Activated CD4-positive, alpha-beta T cell treated with anti-CD3 and anti-CD28 coated beads for 36 hours (primary cell): ENCODE measurements at regions of chr15 and their contacts with region 1.

Region 1: DNA sequence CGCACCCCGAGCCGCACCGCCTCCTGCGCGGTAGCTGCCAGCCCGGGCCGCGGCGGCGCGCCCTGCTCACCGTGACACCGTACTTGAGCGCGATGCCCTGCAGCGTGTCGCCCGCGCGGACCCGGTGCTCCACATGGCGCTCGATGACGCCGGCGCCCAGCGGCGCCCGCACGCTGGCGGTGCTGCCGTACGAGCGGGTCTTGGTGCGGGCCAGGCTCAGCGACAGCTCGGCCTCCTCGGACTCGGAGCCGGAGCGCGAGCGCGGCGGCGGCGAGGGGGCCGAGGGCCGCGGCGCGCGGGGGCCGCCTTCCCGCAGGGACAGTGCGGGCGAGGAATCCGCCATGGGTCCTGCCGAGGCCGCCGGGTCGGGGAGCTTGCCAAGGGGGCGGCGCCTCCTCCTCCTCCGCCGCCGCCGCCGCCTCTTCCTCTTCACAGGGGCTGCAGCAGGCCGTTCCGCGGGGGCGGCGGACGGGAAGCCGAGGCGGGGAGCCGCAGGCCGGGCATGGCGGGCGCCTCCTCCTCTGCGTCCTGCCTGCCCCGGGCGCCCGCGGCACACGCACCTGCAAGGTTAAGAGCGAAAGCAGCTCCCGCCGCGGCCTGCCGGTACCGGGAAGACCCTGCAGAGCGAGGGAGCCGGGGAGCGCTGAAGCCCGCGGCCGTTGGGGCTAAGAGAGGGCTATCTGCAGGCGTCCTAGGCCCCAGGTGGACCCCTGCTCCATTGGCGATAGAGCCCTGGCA is at the start of gene LYSMD2:
- DNase-seq: peak; percentile 81
- ATAC-seq: peak; percentile 45
- H3K4me3 Mint-ChIP-seq: peak within 1 kb of the TSS; percentile 77
- H3K27ac Mint-ChIP-seq: peak within 1 kb of the TSS; percentile 88
- H3K4me1 Mint-ChIP-seq: peaks cover 55% of the 10 kb centered on the region
- H3K27me3 Mint-ChIP-seq: no peaks in the 10 kb centered on the region
- total RNA-seq, gene LYSMD2: 19.1 to 20.1 TPM

Region 2: DNA sequence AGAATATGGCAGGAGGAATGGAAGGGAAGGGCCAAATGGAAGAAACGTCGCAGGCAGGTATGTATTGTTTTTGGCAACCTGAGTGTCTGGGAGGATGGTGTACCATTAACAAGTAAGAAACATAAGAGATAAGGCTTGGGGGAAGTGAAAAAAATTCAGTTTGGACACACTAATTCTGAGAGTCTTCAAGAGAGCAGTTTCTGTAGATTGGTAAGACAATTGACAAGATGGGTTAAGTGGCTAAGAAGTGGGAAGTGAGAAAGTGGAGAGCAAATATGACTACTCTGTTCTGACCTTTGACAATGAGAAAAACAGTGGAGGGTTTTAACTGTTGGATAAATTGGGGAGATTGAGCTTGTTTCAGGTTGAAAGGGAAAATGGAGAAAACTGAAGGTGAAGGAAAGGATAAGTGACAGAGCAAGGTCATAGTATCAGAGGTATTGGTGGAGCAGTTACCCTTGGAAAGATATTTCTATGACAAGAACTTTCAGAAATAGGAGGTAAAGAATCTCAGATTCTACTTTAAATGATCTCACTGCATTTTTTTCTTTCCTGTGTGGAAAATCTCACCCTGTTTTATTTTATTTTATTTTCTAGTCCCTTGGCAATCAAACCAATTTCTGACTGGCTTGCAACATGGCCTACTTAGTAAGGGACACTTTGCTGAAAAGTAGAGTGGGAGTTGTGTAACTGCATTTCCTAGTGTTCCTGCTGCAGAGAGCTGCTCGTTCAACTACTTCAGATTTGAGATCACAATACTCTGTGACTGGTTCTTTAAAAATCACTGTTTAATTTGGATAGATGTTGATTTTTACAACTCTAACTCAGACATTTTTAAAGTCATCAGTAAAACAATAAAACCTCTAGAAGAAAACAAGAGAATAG is 1359.3 kb before region 1 on chr15:
- CTCF ChIA-PET with region 1: no interaction called
- POLR2A ChIA-PET with region 1: no interaction called
- intact Hi-C with region 1: no loop called
- DNase-seq: no peak
- ATAC-seq: peak; percentile 96
- H3K4me3 Mint-ChIP-seq: no peak overlapping the region
- H3K27ac Mint-ChIP-seq: peak overlapping the region; percentile 77
- H3K4me1 Mint-ChIP-seq: peaks cover 19% of the 10 kb centered on the region
- H3K27me3 Mint-ChIP-seq: no peaks in the 10 kb centered on the region

Region 3: GRCh38 chr15:50686468-50687301 is 1050.8 kb before region 1 on chr15 and contains the start of gene TRPM7:
- CTCF ChIA-PET with region 1: no interaction called
- POLR2A ChIA-PET with region 1: no interaction called
- intact Hi-C with region 1: loop called in 1 of 2 experiments (anchors 5 kb)
- DNase-seq: peak; percentile 95
- ATAC-seq: peak; percentile 79
- H3K4me3 Mint-ChIP-seq: peak within 1 kb of the TSS; percentile 99
- H3K27ac Mint-ChIP-seq: peak within 1 kb of the TSS; percentile 97
- H3K4me1 Mint-ChIP-seq: peaks cover 49% of the 10 kb centered on the region
- H3K27me3 Mint-ChIP-seq: no peaks in the 10 kb centered on the region
- total RNA-seq, gene TRPM7: 40.7 to 41.4 TPM

Region 4: GRCh38 chr15:51470512-51470911 is 266.9 kb before region 1 on chr15:
- CTCF ChIA-PET with region 1: no interaction called
- POLR2A ChIA-PET with region 1: no interaction called
- intact Hi-C with region 1: no loop called
- DNase-seq: no peak
- ATAC-seq: no peak
- H3K4me3 Mint-ChIP-seq: no peak overlapping the region
- H3K27ac Mint-ChIP-seq: no peak overlapping the region
- H3K4me1 Mint-ChIP-seq: no peaks in the 10 kb centered on the region
- H3K27me3 Mint-ChIP-seq: no peaks in the 10 kb centered on the region

Region 5: DNA sequence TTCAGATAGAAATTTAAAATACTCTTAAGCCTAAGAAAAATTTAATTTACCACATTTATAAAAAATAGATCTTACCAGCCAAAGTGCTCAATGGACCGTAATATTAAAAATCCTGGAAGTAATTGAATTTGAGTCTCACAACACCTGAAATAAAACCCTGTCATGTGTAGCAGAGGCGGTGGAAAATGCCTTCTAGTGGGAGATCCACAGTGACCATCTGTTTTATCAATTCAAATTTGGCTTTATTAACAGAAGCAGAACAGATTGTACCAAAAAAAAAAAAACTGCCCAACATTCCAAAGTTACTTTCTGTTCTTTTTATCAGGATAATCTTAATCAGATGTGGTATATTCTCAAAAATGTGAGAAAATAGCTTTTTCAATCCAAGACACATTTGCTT is 186.6 kb before region 1 on chr15:
- CTCF ChIA-PET with region 1: no interaction called
- POLR2A ChIA-PET with region 1: no interaction called
- intact Hi-C with region 1: no loop called
- DNase-seq: no peak
- ATAC-seq: no peak
- H3K4me3 Mint-ChIP-seq: no peak overlapping the region
- H3K27ac Mint-ChIP-seq: no peak overlapping the region
- H3K4me1 Mint-ChIP-seq: no peaks in the 10 kb centered on the region
- H3K27me3 Mint-ChIP-seq: no peaks in the 10 kb centered on the region

Region 6: DNA sequence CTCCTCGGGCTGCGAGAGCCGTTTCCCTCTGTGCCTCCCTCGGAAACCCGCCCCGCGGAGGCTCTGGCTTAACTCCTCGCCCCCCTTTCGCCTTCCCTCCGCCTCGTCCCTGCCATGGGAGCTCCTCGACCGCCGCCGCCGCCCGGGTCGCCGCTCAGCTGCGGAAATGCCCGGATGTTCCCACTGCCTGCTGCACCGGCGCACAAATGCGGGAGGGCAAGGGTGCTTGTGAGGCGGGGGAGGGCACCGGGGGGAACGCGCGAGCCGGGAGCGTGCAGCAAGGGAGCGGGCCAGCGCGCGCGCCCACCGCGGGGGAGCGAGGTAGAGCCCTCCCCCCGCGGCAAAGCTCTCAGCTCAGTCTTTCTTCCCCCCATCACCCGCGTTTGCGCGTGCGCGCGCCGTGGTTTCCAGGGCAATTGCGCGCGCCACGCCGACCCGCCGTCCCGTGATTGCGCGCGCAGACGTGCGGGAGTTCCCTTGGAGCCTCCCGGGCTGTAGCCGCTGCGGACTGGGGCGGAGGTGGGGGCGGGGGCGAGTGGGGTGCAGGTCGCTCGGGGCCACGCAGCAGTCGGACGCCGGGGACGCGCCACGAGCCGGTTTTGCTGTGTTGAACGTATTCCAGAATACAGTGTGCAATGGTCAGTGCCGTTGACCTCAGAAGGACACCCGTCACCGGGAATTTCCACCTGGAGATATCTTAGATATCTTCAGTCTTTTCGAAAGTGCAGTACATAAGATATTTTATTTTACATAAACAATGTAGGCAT is 114.7 kb before region 1 on chr15 and contains the start of gene DMXL2:
- CTCF ChIA-PET with region 1: interaction called, 3 read pairs
- POLR2A ChIA-PET with region 1: interaction called, 3 read pairs
- intact Hi-C with region 1: loop called in 1 of 2 experiments (anchors 5 kb)
- DNase-seq: peak; percentile 85
- ATAC-seq: peak; percentile 72
- H3K4me3 Mint-ChIP-seq: peak within 1 kb of the TSS; percentile 83
- H3K27ac Mint-ChIP-seq: peak within 1 kb of the TSS; percentile 58
- H3K4me1 Mint-ChIP-seq: peaks cover 21% of the 10 kb centered on the region
- H3K27me3 Mint-ChIP-seq: peaks cover 17% of the 10 kb centered on the region
- total RNA-seq, gene DMXL2: 5.9 to 7.0 TPM

Region 7: DNA sequence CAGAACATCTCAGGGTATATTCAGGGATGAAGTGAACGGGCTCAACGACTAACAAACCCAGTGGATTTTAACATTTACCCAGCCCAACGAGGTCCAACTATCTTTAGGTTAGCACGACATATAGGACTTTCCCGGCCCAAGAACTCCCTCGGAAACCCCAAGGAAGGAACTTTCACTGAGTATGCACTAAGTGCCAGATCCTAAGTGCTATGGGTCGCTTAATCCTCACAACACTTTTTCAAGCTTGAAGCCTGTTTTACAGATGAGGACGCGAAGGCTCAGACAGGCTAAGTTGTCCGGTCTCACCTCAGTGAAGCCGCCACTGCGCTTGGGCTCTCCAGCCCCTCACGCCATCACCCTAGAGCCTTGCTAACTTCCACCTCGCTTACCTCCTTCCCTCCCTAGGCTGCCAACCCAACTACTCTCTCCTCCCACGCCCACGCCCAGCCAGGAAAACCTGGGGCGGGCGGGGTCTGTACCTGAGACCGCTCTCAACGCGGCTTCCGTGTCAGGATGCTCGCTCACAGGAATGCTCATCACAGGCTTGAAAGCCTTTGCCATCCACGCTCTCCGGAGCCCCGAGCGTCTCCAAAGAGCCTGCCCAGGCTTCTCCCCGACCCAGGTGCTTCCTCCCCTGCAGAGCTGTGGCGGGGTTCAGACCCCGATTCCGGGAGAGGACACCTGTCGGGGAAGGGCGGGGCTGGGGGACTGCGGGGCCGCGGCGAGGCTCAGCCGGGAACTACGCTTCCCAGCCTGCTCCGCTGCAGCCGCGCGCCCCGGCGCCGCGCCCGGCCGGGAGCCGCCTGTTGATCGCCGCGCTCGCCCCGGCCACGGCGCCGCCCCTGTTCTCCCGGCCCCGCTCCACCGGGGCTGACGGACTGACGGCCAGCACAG is 13.6 kb after region 1 on chr15 and contains the start of gene TMOD2:
- CTCF ChIA-PET with region 1: interaction called, 7 read pairs
- POLR2A ChIA-PET with region 1: interaction called, 5 read pairs
- intact Hi-C with region 1: loop called (anchors 1 to 2 kb)
- DNase-seq: peak; percentile 72
- ATAC-seq: peak; percentile 90
- H3K4me3 Mint-ChIP-seq: peak within 1 kb of the TSS; percentile 79
- H3K27ac Mint-ChIP-seq: peak within 1 kb of the TSS; percentile 66
- H3K4me1 Mint-ChIP-seq: peaks cover 24% of the 10 kb centered on the region
- H3K27me3 Mint-ChIP-seq: peaks cover 11% of the 10 kb centered on the region
- total RNA-seq, gene TMOD2: 5.4 to 6.9 TPM

Region 8: DNA sequence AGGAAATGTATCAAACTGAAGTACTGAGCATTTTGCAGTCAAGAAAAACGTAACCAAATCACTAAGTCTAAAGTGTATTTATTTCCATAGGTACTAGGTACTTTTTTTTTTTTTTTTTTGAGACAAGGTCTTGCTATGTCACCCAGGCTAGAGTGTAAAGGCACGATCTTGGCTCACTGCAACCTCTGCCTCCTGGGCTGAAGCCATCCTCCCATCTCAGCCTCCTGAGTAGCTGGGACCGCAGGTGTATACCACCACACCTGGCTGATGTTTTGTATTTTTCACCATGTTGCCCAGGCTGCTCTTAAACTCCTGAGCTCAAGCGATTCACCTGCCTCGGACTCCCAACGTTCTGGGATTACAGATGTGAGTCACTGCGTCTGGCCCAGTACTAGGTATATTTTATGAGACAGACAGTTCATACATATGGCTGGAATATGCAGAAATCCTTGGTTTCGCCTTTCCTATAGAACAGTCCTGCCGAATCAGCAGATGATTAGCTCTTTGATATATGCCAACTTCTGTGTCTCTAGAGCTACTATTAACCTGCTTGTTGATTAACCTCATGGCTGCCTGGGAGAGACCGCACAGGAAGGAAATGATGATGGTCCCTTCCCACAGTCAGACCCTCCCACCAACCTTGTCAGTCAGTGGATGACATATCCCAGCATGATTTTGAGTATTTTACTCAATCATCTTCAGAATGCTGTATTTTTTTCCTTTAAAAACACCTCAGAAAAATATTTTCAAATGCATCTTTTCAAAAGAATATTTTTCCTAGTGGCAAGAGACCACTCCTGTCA is 124.3 kb after region 1 on chr15:
- CTCF ChIA-PET with region 1: no interaction called
- POLR2A ChIA-PET with region 1: no interaction called
- intact Hi-C with region 1: loop called in 1 of 2 experiments (anchors 1 kb)
- DNase-seq: peak; percentile 77
- ATAC-seq: peak; percentile 84
- H3K4me3 Mint-ChIP-seq: peak overlapping the region; percentile 51
- H3K27ac Mint-ChIP-seq: peak overlapping the region; percentile 75
- H3K4me1 Mint-ChIP-seq: peaks cover 65% of the 10 kb centered on the region
- H3K27me3 Mint-ChIP-seq: no peaks in the 10 kb centered on the region

Region 9: DNA sequence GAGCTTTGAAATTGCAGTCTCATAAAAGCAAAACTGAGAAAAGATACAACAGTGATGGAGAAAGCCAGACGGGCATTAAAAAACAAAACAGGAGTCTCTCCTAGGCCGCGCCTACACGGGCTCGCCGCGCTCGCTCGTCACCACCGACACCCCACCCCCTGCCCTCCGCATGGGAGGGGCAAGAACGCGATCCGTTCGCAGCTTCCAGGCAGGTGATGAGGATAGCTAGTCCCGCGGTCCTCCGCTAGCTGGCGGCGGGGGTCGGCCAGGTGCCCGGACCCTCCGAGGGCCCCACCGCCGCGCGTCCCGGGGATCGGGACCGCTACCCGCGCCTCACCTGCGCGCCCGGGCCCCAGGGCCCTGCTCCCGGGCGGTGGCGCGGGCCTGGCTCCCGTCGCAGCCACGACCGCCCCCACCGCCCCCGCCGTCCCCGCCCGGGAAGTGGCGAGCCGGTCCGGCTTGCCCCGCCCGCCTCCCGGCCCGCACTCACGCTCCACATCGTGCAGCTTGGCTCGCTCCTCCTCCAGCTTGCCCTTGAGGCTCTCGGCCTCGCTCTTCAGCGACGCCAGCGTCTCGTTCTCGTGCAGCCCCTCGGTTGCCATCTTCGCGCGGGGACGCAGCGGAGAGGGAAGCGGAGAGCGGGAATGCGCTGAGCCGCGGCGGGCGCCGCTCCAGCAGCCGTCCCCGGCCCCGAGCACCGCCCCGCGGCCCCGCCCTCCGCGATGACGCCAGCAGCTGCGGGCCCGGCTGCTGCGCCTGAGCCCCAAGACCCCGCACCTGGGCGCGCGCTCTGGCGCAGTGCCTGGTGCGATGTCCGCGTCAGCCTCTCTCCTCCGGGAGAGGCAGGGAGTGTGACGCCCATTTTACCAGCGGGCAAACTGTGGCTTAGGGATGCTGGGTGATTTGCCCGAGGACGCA is 442.1 kb after region 1 on chr15:
- CTCF ChIA-PET with region 1: no interaction called
- POLR2A ChIA-PET with region 1: no interaction called
- intact Hi-C with region 1: loop called in 1 of 2 experiments (anchors 1 kb)
- DNase-seq: peak; percentile 93
- ATAC-seq: peak; percentile 89
- H3K4me3 Mint-ChIP-seq: peak overlapping the region; percentile 82
- H3K27ac Mint-ChIP-seq: peak overlapping the region; percentile 97
- H3K4me1 Mint-ChIP-seq: peaks cover 22% of the 10 kb centered on the region
- H3K27me3 Mint-ChIP-seq: no peaks in the 10 kb centered on the region